K562 (cell line): ENCODE measurements at regions of chr4 and their contacts with region 1.

Region 1: DNA sequence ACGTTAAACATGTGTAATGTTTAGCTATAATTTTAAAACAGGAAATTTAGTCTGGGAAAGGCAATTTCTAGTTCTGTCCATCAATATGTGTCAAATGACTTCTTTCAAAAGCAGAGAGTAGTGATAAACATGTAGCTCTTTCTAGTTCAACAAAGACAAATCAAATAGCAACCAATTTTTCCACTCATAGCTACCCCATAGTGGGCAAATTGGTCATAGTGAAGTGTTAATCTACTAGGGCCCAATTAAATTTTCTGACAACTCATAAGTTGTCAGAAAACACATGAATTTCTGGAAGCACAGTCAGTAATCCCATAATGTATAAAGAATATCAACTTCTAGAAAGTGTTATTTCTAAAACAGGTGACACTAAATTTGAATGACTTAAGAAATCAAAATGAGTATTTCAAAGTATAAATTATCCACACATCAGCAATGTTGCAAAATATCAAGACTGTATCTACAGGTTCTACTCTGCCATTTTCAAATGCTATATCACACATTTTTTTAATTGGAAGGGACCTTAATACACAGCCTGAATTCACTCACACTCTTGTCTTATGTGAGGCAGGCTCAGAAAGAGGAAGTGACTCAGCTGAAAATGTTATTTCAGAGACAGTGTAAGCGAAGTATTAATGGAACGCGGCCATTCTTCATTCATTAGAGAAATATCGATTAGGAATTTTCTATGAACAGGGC is 7.7 kb downstream of the OCIAD2 start:
- DNase-seq: peak in 2 of 4 experiments; percentile 53 to 70
- ATAC-seq: peak; percentile 89
- H3K4me3 ChIP-seq: 0 out of 2 replicates have a peak overlapping the region, but pooled peaks have one; percentile 4
- H3K27ac ChIP-seq: peak overlapping the region; percentile 65
- H3K4me1 ChIP-seq: peaks cover 0 to 17% of the 10 kb centered on the region in 2 experiments; a peak in 3 of 5 replicates
- H3K27me3 ChIP-seq: no peaks in the 10 kb centered on the region
- CTCF ChIP-seq: no peak
- EP300 ChIP-seq: peak; percentile 38; the same call in 1 of the 2 replicates
- POLR2A ChIP-seq: no peak
- RAD21 ChIP-seq: no peak

Region 2: GRCh38 chr4:48578132-48578968 is 320.5 kb before region 1 on chr4:
- CTCF ChIA-PET with region 1: interaction called, 3 read pairs
- POLR2A ChIA-PET with region 1: no interaction called
- in situ Hi-C with region 1: no loop called
- intact Hi-C with region 1: loop called (anchors 2 kb)
- DNase-seq: peak; percentile 45 to 77 (median 58)
- ATAC-seq: peak; percentile 94
- H3K4me3 ChIP-seq: no peak overlapping the region
- H3K27ac ChIP-seq: no peak overlapping the region
- H3K4me1 ChIP-seq: no peaks in the 10 kb centered on the region
- H3K27me3 ChIP-seq: no peaks in the 10 kb centered on the region
- CTCF ChIP-seq: peak; percentile 76 to 84 (median 80)
- EP300 ChIP-seq: no peak
- POLR2A ChIP-seq: no peak
- RAD21 ChIP-seq: peak; percentile 91 to 96